ENCODE measurements at regions of chr11 and their contacts with region 1.

Region 1: DNA sequence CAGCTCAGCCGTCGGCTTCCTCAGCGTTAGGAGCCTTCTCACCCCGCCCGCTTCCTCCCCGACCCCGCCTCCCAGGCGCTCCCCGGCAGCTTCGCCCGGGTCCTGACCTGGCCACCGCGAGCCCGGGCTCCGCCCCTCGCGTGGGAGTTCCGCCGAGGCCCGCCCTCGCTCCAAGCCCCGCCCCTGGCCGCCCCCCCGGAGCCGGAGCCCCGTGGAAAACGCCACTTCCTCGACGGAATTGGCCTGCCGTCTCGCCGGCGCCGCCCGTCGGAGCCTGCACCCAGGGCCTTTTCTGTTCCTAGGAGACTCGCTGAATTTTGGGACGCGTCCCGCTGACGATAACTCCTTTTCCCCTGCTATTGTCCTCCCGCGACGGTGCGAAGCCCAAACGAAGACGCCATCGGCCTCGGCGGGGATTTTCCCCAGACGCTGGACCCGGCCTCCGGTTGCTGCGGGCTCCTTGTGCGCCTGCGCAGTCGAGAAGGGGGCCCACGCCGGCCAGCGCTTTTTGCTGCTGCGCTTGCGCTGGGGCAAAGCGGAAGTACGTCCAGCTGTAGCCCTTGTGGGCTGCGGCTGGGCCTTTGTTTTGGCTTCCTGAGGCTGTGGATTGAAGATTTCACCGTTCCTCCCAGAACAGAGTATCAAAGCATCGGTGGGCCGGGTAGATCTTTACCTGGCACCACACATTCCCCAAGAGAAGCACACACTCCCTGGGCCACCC is 10.0 kb downstream of the RELA start:
- DNase-seq: peak; percentile 96

Region 2: GRCh38 chr11:65595543-65596281 is 57.0 kb before region 1 on chr11 and contains the start of gene KCNK7:
- CTCF ChIA-PET with region 1: no interaction called
- POLR2A ChIA-PET with region 1: no interaction called
- DNase-seq: no peak

Region 3: GRCh38 chr11:65637794-65638317 is 14.8 kb before region 1 on chr11 and contains the start of gene SIPA1:
- CTCF ChIA-PET with region 1: no interaction called
- POLR2A ChIA-PET with region 1: interaction called, 12 read pairs
- DNase-seq: peak; percentile 94

Region 4: GRCh38 chr11:65662799-65663638 is 10.3 kb after region 1 on chr11 and contains the start of gene RELA:
- CTCF ChIA-PET with region 1: interaction called, 3 read pairs
- POLR2A ChIA-PET with region 1: interaction called, 37 read pairs
- DNase-seq: peak; percentile 96

Measured in HEK293T (cell line).